ENCODE measurements at regions of chr2 and their contacts with region 1.

Region 1: DNA sequence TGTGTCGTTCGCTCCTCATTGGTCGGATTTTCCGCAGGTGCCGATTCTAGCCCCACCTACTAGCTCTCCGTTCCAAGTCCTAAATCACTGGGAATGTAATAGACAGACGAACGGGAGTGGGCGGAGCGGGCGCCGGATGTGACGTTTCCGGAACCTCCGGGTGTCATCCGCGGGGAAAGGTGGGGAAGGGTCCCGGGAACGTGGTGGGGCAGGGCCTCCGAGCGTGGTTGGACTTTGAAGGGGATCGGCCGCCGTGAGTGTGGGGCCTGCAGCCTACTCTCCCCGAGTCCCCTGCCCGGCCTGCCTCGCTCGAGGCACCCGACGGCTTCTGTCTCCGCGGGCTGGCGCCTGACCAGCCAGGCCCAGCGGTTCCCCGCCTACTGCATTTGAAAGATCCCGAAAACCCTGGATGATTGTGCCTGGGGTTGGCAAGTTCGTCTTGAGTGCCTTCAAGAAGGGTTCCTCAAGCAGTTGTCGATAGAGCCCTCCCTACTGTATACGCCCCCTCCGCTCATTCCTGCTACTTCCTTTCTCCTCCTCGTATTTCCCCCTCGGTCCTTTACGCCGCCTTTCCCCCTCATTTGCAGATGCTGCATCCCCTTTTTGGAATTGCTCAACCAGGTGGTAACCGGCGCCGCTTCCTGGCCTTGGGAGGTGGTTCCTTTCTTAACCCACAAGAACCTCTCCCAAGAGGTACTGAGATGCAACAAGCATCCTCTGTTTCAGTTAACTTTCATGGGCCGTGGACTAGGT is at the start of gene STAMBP:
- DNase-seq: peak; percentile 72
- H3K4me3 ChIP-seq: peak within 1 kb of the TSS; percentile 82
- CTCF ChIP-seq: no peak

Region 2: GRCh38 chr2:73716543-73717250 is 112.3 kb before region 1 on chr2:
- CTCF ChIA-PET with region 1: no interaction called
- POLR2A ChIA-PET with region 1: no interaction called
- DNase-seq: peak; percentile 1
- H3K4me3 ChIP-seq: no peak overlapping the region
- CTCF ChIP-seq: no peak

Region 3: GRCh38 chr2:73839652-73840411 is 10.8 kb after region 1 on chr2:
- CTCF ChIA-PET with region 1: interaction called, 10 read pairs
- POLR2A ChIA-PET with region 1: interaction called, 3 read pairs
- DNase-seq: no peak
- H3K4me3 ChIP-seq: no peak overlapping the region
- CTCF ChIP-seq: no peak

Region 4: GRCh38 chr2:73961823-73962615 is 133.0 kb after region 1 on chr2:
- CTCF ChIA-PET with region 1: no interaction called
- POLR2A ChIA-PET with region 1: no interaction called
- DNase-seq: no peak
- H3K4me3 ChIP-seq: no peak overlapping the region
- CTCF ChIP-seq: no peak

Region 5: DNA sequence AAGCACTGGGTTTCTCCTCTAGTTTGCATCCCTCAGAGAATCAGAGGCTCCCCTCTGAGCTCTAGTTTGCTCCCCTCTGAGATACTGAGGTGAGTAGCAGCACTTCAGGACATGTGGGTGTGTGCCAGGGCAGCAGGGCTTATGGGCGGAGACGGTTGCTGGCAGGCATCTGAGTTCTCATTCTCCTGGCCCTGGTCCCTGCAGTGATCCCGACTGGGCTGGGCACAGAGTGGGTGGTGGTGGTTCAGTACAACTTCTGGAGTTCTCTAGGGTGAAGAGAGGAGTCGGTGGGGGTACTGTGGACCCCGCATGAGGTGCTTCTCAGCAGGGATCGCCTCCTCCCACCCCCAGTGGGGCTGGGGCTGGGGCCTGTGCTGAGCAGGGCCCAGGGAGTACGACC is 270.8 kb after region 1 on chr2:
- CTCF ChIA-PET with region 1: interaction called, 66 read pairs
- POLR2A ChIA-PET with region 1: no interaction called
- DNase-seq: no peak
- H3K4me3 ChIP-seq: no peak overlapping the region
- CTCF ChIP-seq: no peak

Region 6: GRCh38 chr2:74119912-74120825 is 291.2 kb after region 1 on chr2:
- CTCF ChIA-PET with region 1: interaction called, 29 read pairs
- POLR2A ChIA-PET with region 1: interaction called, 5 read pairs
- DNase-seq: peak; percentile 12
- H3K4me3 ChIP-seq: peak overlapping the region; percentile 80
- CTCF ChIP-seq: peak; percentile 83

Region 7: GRCh38 chr2:74198461-74199274 is 369.7 kb after region 1 on chr2 and contains the start of gene MTHFD2:
- CTCF ChIA-PET with region 1: interaction called, 15 read pairs
- POLR2A ChIA-PET with region 1: interaction called, 3 read pairs
- DNase-seq: peak; percentile 85
- H3K4me3 ChIP-seq: peak within 1 kb of the TSS; percentile 99
- CTCF ChIP-seq: peak; percentile 97

Region 8: GRCh38 chr2:75186821-75187220 is 1357.8 kb after region 1 on chr2:
- CTCF ChIA-PET with region 1: no interaction called
- POLR2A ChIA-PET with region 1: no interaction called
- DNase-seq: no peak
- H3K4me3 ChIP-seq: no peak overlapping the region
- CTCF ChIP-seq: no peak